GM10248 (cell line): ENCODE measurements at regions of chr4 and their contacts with region 1.

Region 1: GRCh38 chr4:112765317-112765975 is 128.5 kb downstream of the LARP7 start:
- DNase-seq: peak; percentile 51
- CTCF ChIP-seq: peak; percentile 54

Region 2: GRCh38 chr4:112633477-112634235 is 131.8 kb before region 1 on chr4:
- CTCF ChIA-PET with region 1: interaction called, 12 read pairs
- POLR2A ChIA-PET with region 1: no interaction called
- DNase-seq: peak; percentile 27
- CTCF ChIP-seq: peak; percentile 60

Region 3: GRCh38 chr4:112747036-112747435 is 18.4 kb before region 1 on chr4:
- CTCF ChIA-PET with region 1: interaction called, 65 read pairs
- POLR2A ChIA-PET with region 1: no interaction called
- DNase-seq: no peak
- CTCF ChIP-seq: no peak

Region 4: DNA sequence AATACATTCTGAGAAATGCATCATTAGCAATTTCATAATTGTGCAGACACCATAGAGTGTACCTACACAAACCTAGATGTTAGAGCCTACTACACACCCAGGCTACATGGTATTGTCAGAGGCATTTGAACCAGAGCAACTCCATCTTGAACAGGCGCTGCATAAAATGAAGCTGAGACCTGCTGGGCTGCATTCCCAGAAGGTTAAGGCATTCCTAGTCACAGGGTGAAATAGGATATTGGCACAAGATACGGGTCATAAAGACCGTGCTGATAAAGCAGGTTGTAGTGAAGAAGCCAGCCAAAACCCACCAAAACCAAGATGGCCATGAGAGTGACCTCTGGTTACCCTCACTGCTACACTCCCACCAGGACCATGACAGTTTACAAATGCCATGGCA is 12.1 kb before region 1 on chr4:
- CTCF ChIA-PET with region 1: interaction called, 65 read pairs
- POLR2A ChIA-PET with region 1: no interaction called
- DNase-seq: no peak
- CTCF ChIP-seq: no peak

Region 5: GRCh38 chr4:112775801-112776200 is 10.4 kb after region 1 on chr4:
- CTCF ChIA-PET with region 1: interaction called, 20 read pairs
- POLR2A ChIA-PET with region 1: no interaction called
- DNase-seq: no peak
- CTCF ChIP-seq: no peak

Region 6: GRCh38 chr4:112938461-112939058 is 173.1 kb after region 1 on chr4:
- CTCF ChIA-PET with region 1: interaction called, 51 read pairs
- POLR2A ChIA-PET with region 1: no interaction called
- DNase-seq: peak; percentile 40
- CTCF ChIP-seq: peak; percentile 52

Region 7: GRCh38 chr4:112951362-112952312 is 186.2 kb after region 1 on chr4:
- CTCF ChIA-PET with region 1: interaction called, 12 read pairs
- POLR2A ChIA-PET with region 1: no interaction called
- DNase-seq: peak; percentile 20
- CTCF ChIP-seq: peak; percentile 53